A673 (cell line): ENCODE measurements at regions of chr5 and their contacts with region 1.

Region 1: DNA sequence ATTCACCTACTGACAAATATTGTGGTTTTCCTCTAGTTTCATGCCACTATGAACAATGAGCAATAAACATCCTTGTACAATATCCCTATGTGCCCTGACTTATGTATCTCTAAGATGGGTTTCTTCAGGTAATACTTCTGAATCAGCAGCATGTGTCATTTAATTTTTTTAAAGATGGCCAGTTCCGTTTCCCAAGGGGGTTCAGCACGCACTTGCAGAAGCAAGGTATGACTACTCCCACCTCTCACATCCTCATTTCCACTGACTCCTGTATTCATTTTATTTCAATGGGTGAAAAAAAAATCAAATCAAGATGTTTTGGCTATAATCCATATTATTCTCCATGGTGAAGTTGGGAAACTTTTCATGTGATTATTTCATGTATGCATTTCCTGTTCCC is 14.7 kb upstream of the ADAMTS19 start:
- DNase-seq: no peak
- H3K4me3 ChIP-seq: no peak overlapping the region
- H3K27ac ChIP-seq: no peak overlapping the region
- H3K4me1 ChIP-seq: no peaks in the 10 kb centered on the region
- H3K27me3 ChIP-seq: peaks cover 22% of the 10 kb centered on the region
- CTCF ChIP-seq: no peak

Region 2: GRCh38 chr5:129367883-129368282 is 77.5 kb before region 1 on chr5:
- CTCF ChIA-PET with region 1: no interaction called
- POLR2A ChIA-PET with region 1: interaction called, 19 read pairs
- intact Hi-C with region 1: no loop called
- DNase-seq: no peak
- H3K4me3 ChIP-seq: no peak overlapping the region
- H3K27ac ChIP-seq: no peak overlapping the region
- H3K4me1 ChIP-seq: no peaks in the 10 kb centered on the region
- H3K27me3 ChIP-seq: no peaks in the 10 kb centered on the region
- CTCF ChIP-seq: no peak